ENCODE measurements at regions of chr4 and their contacts with region 1.

Region 1: DNA sequence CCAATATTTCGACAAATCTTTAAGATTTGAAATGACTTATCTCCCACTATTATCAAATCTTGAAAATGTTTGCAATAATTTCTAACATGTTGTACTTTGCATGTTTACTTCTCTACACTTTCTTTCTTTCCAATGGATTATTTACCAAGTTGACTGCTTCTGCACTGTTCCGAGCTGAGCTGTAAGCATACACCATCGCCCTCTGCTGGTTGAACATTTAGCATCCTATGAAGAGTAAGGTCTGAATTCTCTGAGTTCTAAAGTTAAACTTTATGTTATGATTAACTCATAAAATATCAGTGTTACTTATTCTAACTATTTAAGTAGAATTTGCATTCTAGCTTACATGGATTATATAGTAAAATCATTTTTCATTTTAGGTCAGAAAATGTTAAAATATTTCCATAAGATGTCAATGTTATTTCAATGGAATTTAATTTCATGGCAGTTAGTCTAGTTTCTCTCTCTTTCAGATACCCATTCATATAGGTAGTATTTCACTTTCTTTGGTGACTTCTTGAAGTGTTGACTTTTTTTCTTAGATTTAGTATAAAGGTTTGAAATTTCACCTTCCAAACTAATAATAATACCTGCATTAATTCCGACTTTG is 137.4 kb downstream of the DKK2 start:
- DNase-seq: peak; percentile 61
- H3K4me3 ChIP-seq: no peak overlapping the region
- H3K27ac ChIP-seq: no peak overlapping the region
- H3K4me1 ChIP-seq: no peaks in the 10 kb centered on the region
- H3K27me3 ChIP-seq: no peaks in the 10 kb centered on the region
- CTCF ChIP-seq: peak; percentile 65 to 69
- POLR2A ChIP-seq: no peak

Region 2: GRCh38 chr4:106238820-106239420 is 659.8 kb before region 1 on chr4:
- CTCF ChIA-PET with region 1: interaction called, 3 read pairs
- POLR2A ChIA-PET with region 1: no interaction called
- dilution Hi-C with region 1: no loop called
- intact Hi-C with region 1: loop called (anchors 10 kb)
- DNase-seq: peak; percentile 40
- H3K4me3 ChIP-seq: no peak overlapping the region
- H3K27ac ChIP-seq: no peak overlapping the region
- H3K4me1 ChIP-seq: no peaks in the 10 kb centered on the region
- H3K27me3 ChIP-seq: no peaks in the 10 kb centered on the region
- CTCF ChIP-seq: peak; percentile 52 to 57
- POLR2A ChIP-seq: no peak

Region 3: GRCh38 chr4:106409893-106410889 is 488.5 kb before region 1 on chr4:
- CTCF ChIA-PET with region 1: no interaction called
- POLR2A ChIA-PET with region 1: no interaction called
- dilution Hi-C with region 1: no loop called
- intact Hi-C with region 1: no loop called
- DNase-seq: no peak
- H3K4me3 ChIP-seq: no peak overlapping the region
- H3K27ac ChIP-seq: no peak overlapping the region
- H3K4me1 ChIP-seq: no peaks in the 10 kb centered on the region
- H3K27me3 ChIP-seq: no peaks in the 10 kb centered on the region
- CTCF ChIP-seq: no peak
- POLR2A ChIP-seq: no peak

Region 4: DNA sequence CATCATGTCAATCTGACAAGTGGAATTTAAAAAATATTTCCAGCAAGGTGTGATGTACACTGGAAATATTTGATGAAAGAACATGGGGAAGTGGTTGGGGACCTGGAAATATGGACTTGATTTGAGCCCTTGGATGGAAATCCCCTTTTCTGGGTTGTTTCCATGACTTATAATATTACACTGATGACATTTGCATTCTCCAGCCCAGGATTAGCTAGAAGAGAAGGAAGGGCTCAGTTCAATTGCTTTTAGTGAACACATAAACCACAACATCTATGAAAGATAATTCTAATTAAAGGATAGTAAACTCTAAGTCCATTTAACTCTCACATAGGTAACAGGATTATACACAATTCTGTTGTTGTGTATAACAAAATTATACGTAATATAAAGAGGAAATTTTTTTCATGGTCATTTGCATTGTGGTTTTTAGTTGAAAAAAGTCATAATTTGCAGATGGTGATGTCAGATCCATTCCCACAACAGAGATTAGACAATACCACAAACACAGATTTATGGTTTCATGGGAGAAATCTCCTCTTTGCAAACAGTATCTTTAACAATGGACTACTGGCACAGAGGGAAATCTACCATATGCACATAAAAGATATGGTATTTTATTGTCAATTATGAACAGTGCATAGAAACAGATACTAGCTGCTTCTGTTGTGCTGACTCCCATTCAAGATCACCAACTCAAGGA is 10.9 kb after region 1 on chr4:
- CTCF ChIA-PET with region 1: interaction called, 16 read pairs
- POLR2A ChIA-PET with region 1: no interaction called
- dilution Hi-C with region 1: no loop called
- intact Hi-C with region 1: no loop called
- DNase-seq: no peak
- H3K4me3 ChIP-seq: no peak overlapping the region
- H3K27ac ChIP-seq: no peak overlapping the region
- H3K4me1 ChIP-seq: no peaks in the 10 kb centered on the region
- H3K27me3 ChIP-seq: peaks cover 4% of the 10 kb centered on the region in 2 experiments
- CTCF ChIP-seq: no peak
- POLR2A ChIP-seq: no peak

Measured in endothelial cell of umbilical vein (primary cell).